Caco-2 (cell line): ENCODE measurements at regions of chr4 and their contacts with region 1.

Region 1: DNA sequence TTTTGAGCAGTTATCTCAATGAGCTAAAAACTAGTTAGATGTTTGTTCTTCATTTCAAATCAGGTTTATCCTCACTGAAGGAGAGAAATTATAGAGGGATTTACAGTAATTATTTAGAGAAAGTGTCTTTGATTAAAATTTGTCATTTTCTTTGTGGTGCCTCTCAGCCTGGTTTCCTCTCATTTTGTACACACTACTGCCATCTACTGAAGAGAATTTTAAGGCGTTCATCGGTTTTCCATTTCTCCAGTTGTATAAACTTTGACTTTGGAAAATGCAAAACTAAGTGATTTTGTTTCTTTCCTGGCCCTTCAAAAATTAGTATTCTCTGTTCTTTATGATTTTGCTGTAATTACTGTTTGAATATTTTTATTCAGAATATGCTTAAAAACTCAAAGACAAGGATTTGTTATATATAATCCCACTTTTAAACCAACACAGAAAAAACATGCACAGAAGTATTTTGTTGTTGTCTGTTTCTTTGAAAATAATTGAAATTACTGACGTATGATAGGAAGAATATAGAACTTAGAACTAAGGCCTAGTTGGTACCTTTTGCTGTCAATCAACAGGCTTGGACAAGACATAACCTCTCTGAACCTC is 34.4 kb upstream of the ANXA3 start:
- DNase-seq: peak in 1 of 2 experiments; percentile 37
- H3K4me3 ChIP-seq: no peak overlapping the region
- H3K4me3 Mint-ChIP-seq: no peak overlapping the region
- H3K27ac Mint-ChIP-seq: no peak overlapping the region
- H3K4me1 ChIP-seq: peaks cover 11% of the 10 kb centered on the region
- H3K4me1 Mint-ChIP-seq: peaks cover 11% of the 10 kb centered on the region
- H3K27me3 ChIP-seq: no peaks in the 10 kb centered on the region
- H3K27me3 Mint-ChIP-seq: no peaks in the 10 kb centered on the region
- CTCF ChIP-seq: peak; percentile 54 to 55

Region 2: DNA sequence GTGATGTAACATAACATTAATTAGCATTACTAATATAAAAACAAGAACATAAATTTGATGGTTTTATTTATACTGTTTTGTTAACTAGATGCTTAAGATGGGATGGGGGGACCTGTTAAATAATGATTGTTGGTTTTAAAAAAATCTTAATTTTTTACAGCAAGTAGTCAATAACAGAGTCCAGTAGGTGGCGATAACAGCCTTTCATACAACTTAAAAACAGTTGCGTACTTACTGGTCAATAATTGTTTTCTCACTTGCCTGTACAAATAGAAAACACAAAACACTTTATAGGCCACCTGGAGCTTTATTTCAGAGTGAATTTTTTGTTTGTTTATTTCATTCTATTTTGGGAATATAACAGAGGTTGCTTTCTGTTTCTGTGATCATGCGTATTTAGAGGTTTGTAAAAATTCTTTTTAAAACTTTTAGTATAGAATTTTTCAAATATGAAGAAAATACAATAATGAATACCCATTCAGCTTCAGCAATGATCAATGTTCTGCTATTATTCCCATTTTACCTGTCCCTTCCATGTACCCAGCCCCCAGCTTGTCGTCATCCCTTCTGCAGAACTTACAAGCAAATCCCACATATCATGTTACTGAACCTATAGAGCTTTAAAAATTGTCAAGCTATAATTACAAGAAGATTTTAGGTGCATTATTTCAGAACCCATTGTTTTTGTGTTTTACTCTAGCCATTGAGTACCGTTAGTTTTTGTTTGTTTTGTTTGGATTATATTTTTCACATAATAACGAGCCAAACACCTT is 557.4 kb before region 1 on chr4:
- CTCF ChIA-PET with region 1: no interaction called
- POLR2A ChIA-PET with region 1: no interaction called
- intact Hi-C with region 1: loop called (anchors 1 kb)
- DNase-seq: peak in 1 of 2 experiments; percentile 47
- H3K4me3 ChIP-seq: no peak overlapping the region
- H3K4me3 Mint-ChIP-seq: no peak overlapping the region
- H3K27ac Mint-ChIP-seq: no peak overlapping the region
- H3K4me1 ChIP-seq: no peaks in the 10 kb centered on the region
- H3K4me1 Mint-ChIP-seq: no peaks in the 10 kb centered on the region
- H3K27me3 ChIP-seq: no peaks in the 10 kb centered on the region
- H3K27me3 Mint-ChIP-seq: no peaks in the 10 kb centered on the region
- CTCF ChIP-seq: peak; percentile 63

Region 3: GRCh38 chr4:77994194-77994721 is 522.9 kb before region 1 on chr4:
- CTCF ChIA-PET with region 1: no interaction called
- POLR2A ChIA-PET with region 1: no interaction called
- intact Hi-C with region 1: loop called (anchors 1 kb)
- DNase-seq: peak; percentile 70 to 77
- H3K4me3 ChIP-seq: no peak overlapping the region
- H3K4me3 Mint-ChIP-seq: no peak overlapping the region
- H3K27ac Mint-ChIP-seq: no peak overlapping the region
- H3K4me1 ChIP-seq: peaks cover 5% of the 10 kb centered on the region
- H3K4me1 Mint-ChIP-seq: peaks cover 14% of the 10 kb centered on the region
- H3K27me3 ChIP-seq: no peaks in the 10 kb centered on the region
- H3K27me3 Mint-ChIP-seq: no peaks in the 10 kb centered on the region
- CTCF ChIP-seq: peak; percentile 71

Region 4: DNA sequence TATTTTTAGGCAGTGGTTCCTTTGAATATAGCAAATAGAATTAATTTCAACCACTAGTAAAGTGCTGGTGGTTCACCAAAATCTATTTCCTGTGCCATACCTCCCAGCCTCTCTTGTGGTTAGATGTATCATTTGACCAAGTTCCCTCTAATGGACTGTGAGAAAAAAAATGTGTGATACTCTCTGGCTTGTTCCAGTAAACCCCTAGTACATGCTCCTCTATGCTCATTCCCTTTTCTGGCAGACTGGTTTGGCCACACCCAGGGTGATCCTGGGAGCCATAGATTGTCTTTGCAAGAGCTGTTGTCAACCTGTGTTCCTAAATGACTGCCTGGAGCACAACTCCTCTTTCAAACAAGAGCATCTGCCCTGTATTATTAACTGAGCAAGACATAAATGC is 350.5 kb before region 1 on chr4:
- CTCF ChIA-PET with region 1: no interaction called
- POLR2A ChIA-PET with region 1: no interaction called
- intact Hi-C with region 1: loop called (anchors 10 kb)
- DNase-seq: no peak
- H3K4me3 ChIP-seq: no peak overlapping the region
- H3K4me3 Mint-ChIP-seq: no peak overlapping the region
- H3K27ac Mint-ChIP-seq: no peak overlapping the region
- H3K4me1 ChIP-seq: 0 out of 2 replicates have a peak, but pooled peaks cover 12% of the 10 kb centered on the region
- H3K4me1 Mint-ChIP-seq: peaks cover 17% of the 10 kb centered on the region
- H3K27me3 ChIP-seq: no peaks in the 10 kb centered on the region
- H3K27me3 Mint-ChIP-seq: no peaks in the 10 kb centered on the region
- CTCF ChIP-seq: no peak

Region 5: DNA sequence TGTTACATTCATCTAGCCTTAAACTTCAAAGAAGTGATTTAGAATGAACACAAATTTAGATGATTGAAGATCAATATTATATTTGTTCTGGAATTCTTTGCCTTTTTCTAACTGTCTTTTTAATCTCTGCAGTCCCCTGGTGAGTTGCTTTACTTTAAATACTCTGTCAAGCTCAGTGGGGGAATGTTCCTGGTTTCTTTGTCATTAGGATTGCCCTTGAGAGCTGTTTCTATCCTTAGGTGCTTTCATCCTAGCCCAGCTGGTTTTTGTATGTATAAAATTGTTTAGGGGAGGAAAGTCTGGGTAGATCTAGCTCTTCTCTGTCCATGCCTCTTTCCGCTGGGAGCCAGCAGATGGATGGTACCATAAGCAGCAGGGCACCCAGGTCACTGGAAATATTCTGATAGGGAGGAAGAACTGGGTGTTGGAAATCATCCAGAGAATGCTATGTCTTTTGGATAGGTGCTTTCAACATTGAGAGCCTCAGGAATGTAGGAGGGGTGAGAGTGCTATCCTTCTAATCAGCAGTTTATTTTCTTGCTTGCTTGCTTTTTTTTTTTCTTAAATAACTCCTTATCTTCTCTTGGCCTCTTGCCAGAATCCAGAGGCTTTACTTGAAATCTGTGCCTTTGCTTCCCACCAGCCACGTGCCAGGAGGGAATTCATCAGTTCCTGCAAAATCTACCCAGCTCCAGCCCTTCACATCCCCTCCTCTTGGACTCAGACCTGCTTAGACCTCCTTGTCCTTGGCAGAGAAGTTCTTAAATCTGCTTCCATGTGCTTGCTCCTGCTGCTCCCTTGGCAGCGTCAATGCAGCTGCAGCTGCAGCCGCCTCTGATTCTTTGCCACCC is 180.8 kb before region 1 on chr4:
- CTCF ChIA-PET with region 1: no interaction called
- POLR2A ChIA-PET with region 1: no interaction called
- intact Hi-C with region 1: loop called (anchors 10 kb)
- DNase-seq: peak in 1 of 2 experiments; percentile 27
- H3K4me3 ChIP-seq: no peak overlapping the region
- H3K4me3 Mint-ChIP-seq: no peak overlapping the region
- H3K27ac Mint-ChIP-seq: no peak overlapping the region
- H3K4me1 ChIP-seq: peaks cover 30% of the 10 kb centered on the region
- H3K4me1 Mint-ChIP-seq: peaks cover 37% of the 10 kb centered on the region
- H3K27me3 ChIP-seq: no peaks in the 10 kb centered on the region
- H3K27me3 Mint-ChIP-seq: no peaks in the 10 kb centered on the region
- CTCF ChIP-seq: no peak

Region 6: DNA sequence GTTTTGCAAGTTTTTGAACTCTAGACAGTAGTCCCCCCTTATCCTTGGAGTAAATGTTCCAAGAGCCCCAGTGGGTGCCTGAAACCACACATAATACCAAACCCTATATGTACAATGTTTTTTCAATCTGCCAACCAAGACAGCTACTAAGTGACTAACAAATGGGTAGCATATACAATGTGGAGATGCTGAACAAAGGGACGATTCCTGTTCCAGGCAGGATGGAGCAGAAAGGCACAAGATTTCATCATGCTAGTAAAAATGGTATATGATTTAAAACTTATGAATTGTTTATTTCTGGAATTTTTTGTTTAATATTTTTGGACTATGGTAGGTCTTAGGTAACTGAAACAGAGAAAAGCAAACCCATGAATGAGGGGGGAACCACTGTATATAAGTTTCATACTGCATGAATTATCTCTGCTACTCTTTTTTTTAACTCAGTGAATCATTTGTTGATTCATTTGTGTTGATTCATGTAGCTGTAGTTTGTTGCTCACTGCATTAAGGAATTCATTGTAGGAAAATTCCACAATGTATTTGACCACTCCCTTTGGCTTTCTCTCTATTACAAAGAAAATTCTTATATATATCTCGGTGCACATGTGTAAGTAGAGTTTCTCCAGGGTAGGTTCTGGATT is 12.5 kb after region 1 on chr4:
- CTCF ChIA-PET with region 1: no interaction called
- POLR2A ChIA-PET with region 1: no interaction called
- intact Hi-C with region 1: no loop called
- DNase-seq: no peak
- H3K4me3 ChIP-seq: no peak overlapping the region
- H3K4me3 Mint-ChIP-seq: no peak overlapping the region
- H3K27ac Mint-ChIP-seq: no peak overlapping the region
- H3K4me1 ChIP-seq: no peaks in the 10 kb centered on the region
- H3K4me1 Mint-ChIP-seq: peaks cover 7% of the 10 kb centered on the region
- H3K27me3 ChIP-seq: no peaks in the 10 kb centered on the region
- H3K27me3 Mint-ChIP-seq: no peaks in the 10 kb centered on the region
- CTCF ChIP-seq: no peak